Panc1 (cell line): ENCODE measurements at regions of chr2 and their contacts with region 1.

Region 1: DNA sequence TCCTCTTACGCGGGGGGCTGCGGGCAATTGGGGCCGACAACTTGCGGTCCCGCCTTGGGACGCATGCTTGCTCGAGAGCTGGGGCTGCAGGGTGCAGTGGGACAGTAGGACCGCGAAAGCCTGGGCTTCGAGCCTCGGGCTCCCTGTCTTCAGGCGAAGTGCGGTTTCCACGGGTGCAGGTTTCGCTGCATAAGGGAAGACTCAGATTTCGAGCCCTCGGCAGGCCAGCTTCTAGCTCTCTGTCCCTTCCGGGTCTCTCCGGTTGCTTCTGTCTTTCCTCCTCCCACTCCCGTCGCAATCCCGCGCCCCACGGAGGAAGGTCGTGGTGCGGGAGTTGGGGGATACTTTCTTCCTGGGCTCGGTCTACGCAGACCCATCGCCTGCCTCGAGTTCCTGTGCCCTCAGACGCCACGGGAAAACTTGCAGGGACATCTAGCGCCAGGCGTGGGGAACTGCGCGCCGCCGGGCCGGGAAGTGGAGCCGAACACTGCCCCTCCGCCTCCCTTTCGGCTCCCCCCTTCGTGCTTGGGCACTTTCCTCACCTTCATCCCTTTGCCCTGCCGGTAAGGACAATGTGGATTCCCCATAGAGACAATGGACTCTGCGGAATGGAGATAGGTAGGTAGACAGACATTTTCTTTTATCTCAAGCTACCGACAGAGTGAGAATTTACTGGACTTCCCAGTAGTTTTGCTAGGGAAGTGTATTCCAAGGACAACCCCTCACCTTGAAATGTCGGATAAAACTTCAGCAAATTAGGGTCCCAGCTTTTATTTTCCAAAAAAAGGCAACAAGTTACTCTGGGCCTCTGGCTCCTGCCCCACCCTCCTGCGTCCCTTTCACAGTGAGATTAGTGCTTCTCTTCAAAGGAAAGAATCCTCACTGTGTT is 4.2 kb upstream of the HOXD13 start:
- DNase-seq: no peak
- ATAC-seq: peak; percentile 87
- H3K4me3 ChIP-seq: peak overlapping the region; percentile 21 to 45
- H3K27ac ChIP-seq: no peak overlapping the region
- H3K4me1 ChIP-seq: peaks cover 9% of the 10 kb centered on the region
- H3K27me3 ChIP-seq: peaks cover 36% of the 10 kb centered on the region
- CTCF ChIP-seq: peak; percentile 94

Region 2: DNA sequence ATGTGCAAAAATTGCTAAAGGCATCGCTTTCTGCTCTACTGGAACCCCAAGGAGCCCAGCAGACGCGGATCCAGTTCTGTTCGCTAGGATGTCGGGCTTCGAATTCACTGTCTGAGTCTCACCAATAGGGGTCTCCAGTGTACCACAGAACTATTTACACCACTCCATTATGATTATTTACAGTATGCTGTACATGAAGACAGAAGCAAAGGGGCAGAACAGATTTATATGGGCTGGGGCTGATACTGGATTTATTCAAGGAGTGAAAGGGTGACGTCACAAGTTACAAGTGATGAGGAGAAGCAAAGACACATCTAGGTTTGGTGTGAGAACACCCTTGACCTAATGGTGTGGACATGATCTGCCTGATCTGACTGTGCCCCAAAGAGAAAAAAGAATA is 721.5 kb before region 1 on chr2:
- CTCF ChIA-PET with region 1: no interaction called
- POLR2A ChIA-PET with region 1: no interaction called
- in situ Hi-C with region 1: no loop called
- intact Hi-C with region 1: loop called (anchors 2 kb)
- DNase-seq: no peak
- ATAC-seq: peak; percentile 91
- H3K4me3 ChIP-seq: no peak overlapping the region
- H3K27ac ChIP-seq: no peak overlapping the region
- H3K4me1 ChIP-seq: no peaks in the 10 kb centered on the region
- H3K27me3 ChIP-seq: 0 out of 2 replicates have a peak, but pooled peaks cover 3% of the 10 kb centered on the region
- CTCF ChIP-seq: peak; percentile 88

Region 3: DNA sequence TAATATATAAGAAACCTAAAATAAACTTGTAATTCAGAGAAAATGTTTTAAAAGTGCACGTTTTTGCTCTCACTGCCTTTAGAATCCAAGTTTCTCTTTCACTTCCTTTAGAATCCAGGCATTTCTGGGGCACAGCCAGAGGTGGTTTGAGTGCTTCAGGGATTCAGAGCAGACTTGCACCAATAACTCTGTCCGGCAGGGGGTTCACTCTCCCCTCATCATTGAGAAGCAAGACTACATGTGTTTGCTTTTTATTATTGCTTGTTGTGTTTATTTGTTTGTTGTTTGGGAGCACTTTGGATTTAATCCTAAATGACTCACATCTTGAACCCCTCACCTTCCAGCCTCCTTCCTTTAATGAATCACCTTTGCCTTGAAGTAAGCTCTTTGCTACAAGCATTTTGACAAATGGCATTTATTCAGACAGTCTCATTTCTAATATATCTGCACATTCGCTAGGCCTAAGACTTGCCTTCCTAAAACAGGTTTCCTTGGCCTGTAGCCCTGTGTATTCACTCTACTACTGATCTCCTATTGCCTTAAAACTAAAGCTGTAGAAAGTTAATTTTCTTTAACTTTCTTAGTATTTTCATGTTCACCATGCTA is 673.3 kb before region 1 on chr2:
- CTCF ChIA-PET with region 1: no interaction called
- POLR2A ChIA-PET with region 1: no interaction called
- in situ Hi-C with region 1: no loop called
- intact Hi-C with region 1: loop called (anchors 2 kb)
- DNase-seq: peak; percentile 61
- ATAC-seq: peak; percentile 94
- H3K4me3 ChIP-seq: no peak overlapping the region
- H3K27ac ChIP-seq: no peak overlapping the region
- H3K4me1 ChIP-seq: no peaks in the 10 kb centered on the region
- H3K27me3 ChIP-seq: no peaks in the 10 kb centered on the region; the same call in 1 of the 2 replicates
- CTCF ChIP-seq: peak; percentile 82

Region 4: DNA sequence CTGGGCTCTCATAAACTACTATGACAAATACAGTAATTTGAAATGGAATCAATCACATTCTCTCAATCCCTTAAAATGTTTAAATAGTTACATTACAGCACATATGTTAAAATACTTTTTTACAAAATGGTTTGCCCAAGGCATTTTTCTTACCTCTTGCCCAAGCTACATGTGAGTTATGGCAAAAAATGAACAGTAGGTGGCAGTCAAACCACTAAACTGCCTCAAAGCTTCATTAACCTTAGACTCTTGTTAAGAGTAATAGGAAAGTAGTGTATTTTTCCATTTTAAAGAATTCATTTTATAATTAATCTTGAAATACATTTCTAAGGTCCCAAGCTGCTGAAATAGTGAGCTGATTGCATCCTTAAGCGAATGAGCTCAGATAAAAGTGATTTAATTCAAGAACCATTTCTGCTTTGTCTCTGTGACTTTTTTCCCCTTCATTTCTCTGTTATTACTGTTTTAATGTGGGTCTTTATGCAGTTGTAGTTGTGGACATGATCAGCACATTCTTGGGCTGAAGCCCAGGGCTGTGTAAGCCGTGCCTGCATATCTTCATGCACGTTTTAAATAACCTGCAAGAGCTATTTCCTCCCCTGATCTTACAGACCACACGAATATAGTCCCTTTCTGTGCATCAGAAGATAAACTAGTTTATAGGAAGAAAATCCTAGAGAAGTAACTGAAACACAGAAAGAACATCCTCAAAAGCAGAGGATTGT is 398.0 kb before region 1 on chr2:
- CTCF ChIA-PET with region 1: interaction called, 8 read pairs
- POLR2A ChIA-PET with region 1: no interaction called
- in situ Hi-C with region 1: no loop called
- intact Hi-C with region 1: loop called (anchors 1 kb)
- DNase-seq: peak; percentile 66
- ATAC-seq: peak; percentile 84
- H3K4me3 ChIP-seq: no peak overlapping the region
- H3K27ac ChIP-seq: no peak overlapping the region
- H3K4me1 ChIP-seq: no peaks in the 10 kb centered on the region
- H3K27me3 ChIP-seq: peaks cover 2% of the 10 kb centered on the region; the same call in 1 of the 2 replicates
- CTCF ChIP-seq: peak; percentile 70; the same call in 1 of the 2 replicates

Region 5: GRCh38 chr2:175964195-175964594 is 124.1 kb before region 1 on chr2:
- CTCF ChIA-PET with region 1: no interaction called
- POLR2A ChIA-PET with region 1: no interaction called
- in situ Hi-C with region 1: no loop called
- intact Hi-C with region 1: loop called (anchors 10 kb)
- DNase-seq: no peak
- ATAC-seq: no peak
- H3K4me3 ChIP-seq: no peak overlapping the region
- H3K27ac ChIP-seq: no peak overlapping the region
- H3K4me1 ChIP-seq: no peaks in the 10 kb centered on the region
- H3K27me3 ChIP-seq: no peaks in the 10 kb centered on the region
- CTCF ChIP-seq: peak; percentile 55; the same call in 1 of the 2 replicates